ENCODE measurements at regions of chr9 and their contacts with region 1.

Region 1: GRCh38 chr9:137129456-137130175 is 9.3 kb upstream of the GRIN1 start:
- DNase-seq: peak; percentile 80 to 97 (median 88)
- ATAC-seq: peak; percentile 92
- H3K4me3 ChIP-seq: peak overlapping the region; percentile 72
- H3K4me3 Mint-ChIP-seq: peak overlapping the region; percentile 94
- H3K27ac ChIP-seq: peak overlapping the region in 1 of 2 donors; percentile 84
- H3K27ac Mint-ChIP-seq: peak overlapping the region; percentile 81
- H3K4me1 ChIP-seq: peaks cover 37% of the 10 kb centered on the region
- H3K4me1 Mint-ChIP-seq: peaks cover 30% of the 10 kb centered on the region
- H3K27me3 ChIP-seq: peaks cover 5 to 7% of the 10 kb centered on the region in 2 experiments
- H3K27me3 Mint-ChIP-seq: peaks cover 8% of the 10 kb centered on the region
- CTCF ChIP-seq: no peak

Region 2: DNA sequence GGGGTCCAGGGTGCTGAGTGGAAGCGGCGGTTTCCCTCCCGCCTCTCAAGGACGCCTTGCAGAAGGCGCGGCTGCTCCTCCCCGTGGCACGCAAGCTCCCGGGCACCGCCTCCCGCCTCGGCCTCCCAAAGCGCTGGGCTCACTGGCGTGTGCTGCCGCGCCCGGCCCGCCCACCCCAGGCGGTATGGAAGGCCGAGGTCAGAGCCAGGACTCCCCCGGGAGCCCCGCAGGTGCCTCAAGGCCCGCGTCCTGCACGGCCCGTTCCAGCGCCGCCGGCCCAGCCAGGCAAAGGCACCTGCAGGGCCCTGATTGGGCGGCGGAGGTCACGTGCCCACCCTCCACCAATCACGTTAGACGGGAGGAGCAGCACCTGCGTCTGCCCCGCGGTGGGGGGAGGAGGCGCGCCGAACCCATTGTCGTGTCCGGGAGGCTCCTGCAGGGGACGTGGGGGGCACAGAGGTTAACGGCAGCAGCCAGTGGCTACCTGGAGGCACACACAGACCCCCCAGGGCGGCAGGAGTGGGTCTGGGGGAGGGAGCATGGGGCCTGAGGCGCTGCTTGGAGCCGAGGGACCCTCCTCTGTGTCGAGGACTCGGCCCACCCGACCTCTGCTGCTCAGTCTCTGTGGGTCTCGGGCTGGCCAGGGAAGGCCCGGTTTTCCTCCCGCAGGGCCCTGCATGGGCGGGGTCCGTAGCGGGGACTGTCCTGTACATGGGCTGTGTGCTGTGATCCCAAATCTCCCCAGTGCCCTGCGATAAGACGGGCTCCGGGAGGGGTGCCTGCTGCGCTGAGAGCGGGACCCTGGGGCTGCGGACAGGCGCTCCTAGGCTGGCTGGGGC is 179.6 kb before region 1 on chr9:
- CTCF ChIA-PET with region 1: no interaction called
- POLR2A ChIA-PET with region 1: no interaction called
- intact Hi-C with region 1: no loop called
- DNase-seq: peak; percentile 93 to 97 (median 96)
- ATAC-seq: peak; percentile 97
- H3K4me3 ChIP-seq: peak overlapping the region; percentile 69
- H3K4me3 Mint-ChIP-seq: peak overlapping the region; percentile 83
- H3K27ac ChIP-seq: peak overlapping the region; percentile 56 to 75
- H3K27ac Mint-ChIP-seq: peak overlapping the region; percentile 86
- H3K4me1 ChIP-seq: peaks cover 38% of the 10 kb centered on the region
- H3K4me1 Mint-ChIP-seq: peaks cover 5% of the 10 kb centered on the region
- H3K27me3 ChIP-seq: no peaks in the 10 kb centered on the region
- H3K27me3 Mint-ChIP-seq: no peaks in the 10 kb centered on the region
- CTCF ChIP-seq: peak; percentile 42

Region 3: GRCh38 chr9:137095664-137096517 is 33.7 kb before region 1 on chr9:
- CTCF ChIA-PET with region 1: interaction called, 6 read pairs
- POLR2A ChIA-PET with region 1: interaction called, 21 read pairs
- intact Hi-C with region 1: no loop called
- DNase-seq: peak; percentile 78 to 95 (median 85)
- ATAC-seq: peak; percentile 98
- H3K4me3 ChIP-seq: peak overlapping the region; percentile 42
- H3K4me3 Mint-ChIP-seq: peak overlapping the region; percentile 86
- H3K27ac ChIP-seq: peak overlapping the region; percentile 59 to 85
- H3K27ac Mint-ChIP-seq: peak overlapping the region; percentile 92
- H3K4me1 ChIP-seq: peaks cover 28% of the 10 kb centered on the region
- H3K4me1 Mint-ChIP-seq: peaks cover 22% of the 10 kb centered on the region
- H3K27me3 ChIP-seq: no peaks in the 10 kb centered on the region
- H3K27me3 Mint-ChIP-seq: no peaks in the 10 kb centered on the region
- CTCF ChIP-seq: peak; percentile 80

Region 4: GRCh38 chr9:137176302-137177182 is 46.9 kb after region 1 on chr9:
- CTCF ChIA-PET with region 1: interaction called, 3 read pairs
- POLR2A ChIA-PET with region 1: interaction called, 3 read pairs
- intact Hi-C with region 1: loop called in 1 of 2 experiments (anchors 10 kb)
- DNase-seq: peak in 5 of 14 experiments; percentile 20 to 61 (median 34)
- ATAC-seq: peak; percentile 62
- H3K4me3 ChIP-seq: no peak overlapping the region
- H3K4me3 Mint-ChIP-seq: no peak overlapping the region
- H3K27ac ChIP-seq: no peak overlapping the region
- H3K27ac Mint-ChIP-seq: no peak overlapping the region
- H3K4me1 ChIP-seq: peaks cover 19% of the 10 kb centered on the region
- H3K4me1 Mint-ChIP-seq: peaks cover 4% of the 10 kb centered on the region
- H3K27me3 ChIP-seq: peaks cover 19 to 22% of the 10 kb centered on the region in 2 experiments
- H3K27me3 Mint-ChIP-seq: no peaks in the 10 kb centered on the region
- CTCF ChIP-seq: no peak

Region 5: GRCh38 chr9:137200311-137201204 is 70.9 kb after region 1 on chr9 and contains the start of gene TPRN:
- CTCF ChIA-PET with region 1: interaction called, 3 read pairs
- POLR2A ChIA-PET with region 1: interaction called, 14 read pairs
- intact Hi-C with region 1: no loop called
- DNase-seq: peak; percentile 93 to 99 (median 98)
- ATAC-seq: peak; percentile 94
- H3K4me3 ChIP-seq: peak within 1 kb of the TSS; percentile 87
- H3K4me3 Mint-ChIP-seq: peak within 1 kb of the TSS; percentile 93
- H3K27ac ChIP-seq: peak within 1 kb of the TSS; percentile 72 to 76
- H3K27ac Mint-ChIP-seq: peak within 1 kb of the TSS; percentile 84
- H3K4me1 ChIP-seq: peaks cover 48% of the 10 kb centered on the region
- H3K4me1 Mint-ChIP-seq: peaks cover 23% of the 10 kb centered on the region
- H3K27me3 ChIP-seq: no peaks in the 10 kb centered on the region
- H3K27me3 Mint-ChIP-seq: no peaks in the 10 kb centered on the region
- CTCF ChIP-seq: no peak
- total RNA-seq, gene TPRN: 6.1 to 8.6 TPM

Region 6: DNA sequence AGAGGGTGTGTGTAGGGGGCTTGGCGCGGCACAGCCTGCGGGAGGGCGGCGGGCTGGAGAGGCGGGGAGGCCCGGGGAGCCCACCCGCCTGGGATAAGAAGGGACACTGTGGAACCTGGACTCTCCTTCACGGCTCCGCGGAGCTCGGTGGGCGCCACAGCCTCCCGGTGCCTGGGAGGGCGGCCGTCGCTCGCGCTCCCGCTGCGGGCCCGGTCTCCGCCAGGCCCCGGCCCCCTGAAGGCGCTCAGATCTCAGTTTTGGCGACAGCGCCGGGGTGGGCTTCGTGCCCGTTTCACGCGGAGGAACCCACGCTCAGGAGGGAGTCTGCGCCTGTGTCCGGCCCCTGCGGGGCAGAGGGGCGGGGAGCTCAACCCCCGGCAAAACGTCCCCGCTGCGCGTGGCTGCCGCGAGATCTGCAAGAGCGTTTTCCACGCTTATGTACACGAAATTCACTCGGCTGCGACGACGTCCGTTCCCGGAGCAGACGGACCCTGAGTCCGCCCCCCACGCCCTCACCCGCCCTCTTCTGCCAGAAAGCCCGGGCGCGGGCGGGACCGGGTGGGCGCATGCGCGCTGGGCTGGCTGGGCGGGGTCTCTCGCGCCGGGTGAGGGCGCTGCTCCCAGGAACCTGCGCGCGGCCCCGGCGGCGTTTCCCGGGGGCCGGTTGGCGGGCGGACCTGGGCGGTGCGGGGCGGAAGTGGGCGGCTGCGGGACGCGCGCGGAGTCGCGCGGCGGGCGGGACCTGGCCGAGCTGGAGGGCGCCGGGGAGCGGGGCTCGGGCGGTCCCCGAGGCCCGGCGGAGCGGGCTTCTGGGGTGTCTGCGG is 125.2 kb after region 1 on chr9 and contains the start of gene NELFB:
- CTCF ChIA-PET with region 1: no interaction called
- POLR2A ChIA-PET with region 1: interaction called, 11 read pairs
- intact Hi-C with region 1: no loop called
- DNase-seq: peak; percentile 87 to 98 (median 96)
- ATAC-seq: peak; percentile 94
- H3K4me3 ChIP-seq: peak within 1 kb of the TSS; percentile 90
- H3K4me3 Mint-ChIP-seq: peak within 1 kb of the TSS; percentile 94
- H3K27ac ChIP-seq: no peak within 1 kb of the TSS
- H3K27ac Mint-ChIP-seq: peak within 1 kb of the TSS; percentile 82
- H3K4me1 ChIP-seq: peaks cover 25% of the 10 kb centered on the region
- H3K4me1 Mint-ChIP-seq: peaks cover 16% of the 10 kb centered on the region
- H3K27me3 ChIP-seq: no peaks in the 10 kb centered on the region
- H3K27me3 Mint-ChIP-seq: no peaks in the 10 kb centered on the region
- CTCF ChIP-seq: no peak
- total RNA-seq, gene NELFB: 20.7 to 21.2 TPM

Measured in CD4-positive, alpha-beta T cell (primary cell).